ENCODE measurements at regions of chr7 and their contacts with region 1.

Region 1: GRCh38 chr7:139431010-139431409 is 52.5 kb downstream of the KLRG2 start:
- DNase-seq: no peak
- H3K4me3 Mint-ChIP-seq: no peak overlapping the region
- H3K27ac Mint-ChIP-seq: no peak overlapping the region
- H3K4me1 Mint-ChIP-seq: peaks cover 6% of the 10 kb centered on the region
- H3K27me3 Mint-ChIP-seq: no peaks in the 10 kb centered on the region

Region 2: GRCh38 chr7:139494835-139495579 is 64.0 kb after region 1 on chr7:
- intact Hi-C with region 1: loop called (anchors 5 kb)
- DNase-seq: no peak
- H3K4me3 Mint-ChIP-seq: peak overlapping the region; percentile 23
- H3K27ac Mint-ChIP-seq: peak overlapping the region; percentile 28
- H3K4me1 Mint-ChIP-seq: peaks cover 27% of the 10 kb centered on the region
- H3K27me3 Mint-ChIP-seq: peaks cover 19% of the 10 kb centered on the region

Region 3: DNA sequence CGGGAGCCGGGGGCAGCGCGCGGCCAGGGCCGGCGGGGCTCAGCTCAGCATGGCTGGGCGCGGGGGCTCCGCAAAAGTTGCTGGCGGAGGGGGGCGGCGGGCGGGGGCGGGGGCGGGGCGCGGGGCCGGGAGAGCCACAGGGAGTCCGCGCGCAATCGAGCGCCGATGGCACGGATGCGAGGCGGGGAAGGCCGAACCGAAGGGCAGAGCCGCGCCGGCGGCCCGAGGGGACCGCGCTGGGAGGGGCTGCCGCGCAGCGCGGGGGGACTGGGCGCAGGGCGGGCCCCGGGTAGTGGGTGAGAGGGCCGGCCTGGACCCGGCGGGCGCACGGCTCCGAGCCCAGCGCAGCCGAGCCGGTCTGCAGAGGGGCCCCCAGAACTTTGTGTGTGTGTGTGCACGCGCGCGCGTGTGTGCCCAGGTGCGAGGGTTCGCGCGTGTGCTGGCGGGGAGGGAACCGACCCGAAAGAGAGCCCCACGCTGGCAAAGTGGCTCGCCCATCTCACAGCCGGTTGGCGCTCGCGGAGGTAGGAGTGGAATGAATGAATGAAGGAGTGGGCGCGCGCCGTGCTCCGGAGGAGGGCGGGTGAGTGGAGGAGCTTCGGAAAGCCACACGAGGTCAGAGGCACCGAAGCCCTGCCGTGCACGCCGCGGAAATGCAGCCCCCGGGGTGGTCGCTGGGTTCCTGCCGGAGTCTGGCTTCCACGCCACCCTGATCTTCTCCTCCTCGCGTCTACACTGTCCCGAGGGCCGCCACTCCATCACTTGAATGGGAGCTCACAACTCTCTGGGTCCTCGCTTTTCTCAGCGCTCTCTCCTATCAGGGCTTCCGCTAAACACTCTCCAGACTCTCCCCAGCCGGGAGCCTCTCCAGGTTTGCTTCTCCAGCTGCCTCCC is 347.2 kb after region 1 on chr7 and contains the start of gene HIPK2:
- intact Hi-C with region 1: no loop called
- DNase-seq: peak; percentile 65
- H3K4me3 Mint-ChIP-seq: peak within 1 kb of the TSS; percentile 99
- H3K27ac Mint-ChIP-seq: peak within 1 kb of the TSS; percentile 98
- H3K4me1 Mint-ChIP-seq: peaks cover 48% of the 10 kb centered on the region
- H3K27me3 Mint-ChIP-seq: peaks cover 15% of the 10 kb centered on the region
- total RNA-seq, gene HIPK2: 28.3 and 29.2 TPM in 2 replicates